ENCODE measurements at regions of chr6 and their contacts with region 1.

Region 1: DNA sequence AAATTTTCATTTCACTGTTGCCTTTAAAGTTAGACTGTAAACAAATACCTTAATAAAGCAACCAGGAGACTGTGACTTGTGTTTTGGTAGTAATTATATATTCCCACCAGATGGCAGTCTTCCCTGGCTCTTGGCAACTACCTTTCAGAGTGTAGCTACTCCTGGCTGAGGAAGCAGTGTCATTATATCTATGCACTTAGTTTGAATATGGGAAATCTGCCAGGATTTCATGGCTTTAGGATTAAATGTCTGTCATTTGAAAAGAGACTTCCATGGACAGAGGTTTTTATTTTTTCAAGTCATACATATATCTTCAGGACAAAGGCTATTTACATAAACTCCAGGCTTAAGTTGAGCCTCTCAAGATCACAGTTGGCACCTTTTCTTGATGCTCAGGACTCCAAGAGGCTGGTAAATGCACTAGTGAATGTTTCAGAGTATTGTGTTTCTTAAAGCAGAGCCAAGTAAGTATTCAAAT is 160.1 kb downstream of the C6orf58 start:
- DNase-seq: peak; percentile 45
- H3K4me3 ChIP-seq: no peak overlapping the region
- H3K27ac ChIP-seq: no peak overlapping the region
- H3K27me3 ChIP-seq: no peaks in the 10 kb centered on the region
- CTCF ChIP-seq: peak; percentile 68

Region 2: DNA sequence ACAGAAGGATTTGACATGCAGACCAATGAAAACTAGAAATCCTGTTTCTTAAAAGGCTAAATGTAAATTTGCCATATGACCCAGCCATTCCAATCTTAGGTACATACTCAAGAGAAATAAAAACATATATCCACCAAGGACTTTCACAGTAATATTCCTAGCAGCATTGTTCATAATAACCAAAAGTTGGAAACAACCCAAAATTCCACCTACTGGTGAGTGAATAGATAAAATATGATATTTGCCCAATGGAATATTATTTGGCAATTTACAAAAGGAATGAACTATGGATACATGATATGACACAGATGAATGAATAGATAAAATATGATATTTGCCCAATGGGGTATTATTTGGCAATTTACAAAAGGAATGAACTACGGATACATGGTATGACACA is 240.6 kb before region 1 on chr6:
- CTCF ChIA-PET with region 1: no interaction called
- POLR2A ChIA-PET with region 1: no interaction called
- DNase-seq: no peak
- H3K4me3 ChIP-seq: no peak overlapping the region
- H3K27ac ChIP-seq: no peak overlapping the region
- H3K27me3 ChIP-seq: no peaks in the 10 kb centered on the region
- CTCF ChIP-seq: no peak

Region 3: GRCh38 chr6:127710668-127711067 is 26.4 kb before region 1 on chr6:
- CTCF ChIA-PET with region 1: no interaction called
- POLR2A ChIA-PET with region 1: no interaction called
- DNase-seq: no peak
- H3K4me3 ChIP-seq: no peak overlapping the region
- H3K27ac ChIP-seq: no peak overlapping the region
- H3K27me3 ChIP-seq: peaks cover 3% of the 10 kb centered on the region
- CTCF ChIP-seq: no peak

Region 4: GRCh38 chr6:128516514-128516898 is 779.5 kb after region 1 on chr6:
- CTCF ChIA-PET with region 1: interaction called, 11 read pairs
- POLR2A ChIA-PET with region 1: no interaction called
- DNase-seq: no peak
- H3K4me3 ChIP-seq: peak overlapping the region; percentile 25; the same call in 1 of the 2 replicates
- H3K27ac ChIP-seq: no peak overlapping the region
- H3K27me3 ChIP-seq: no peaks in the 10 kb centered on the region
- CTCF ChIP-seq: peak; percentile 42

Region 5: DNA sequence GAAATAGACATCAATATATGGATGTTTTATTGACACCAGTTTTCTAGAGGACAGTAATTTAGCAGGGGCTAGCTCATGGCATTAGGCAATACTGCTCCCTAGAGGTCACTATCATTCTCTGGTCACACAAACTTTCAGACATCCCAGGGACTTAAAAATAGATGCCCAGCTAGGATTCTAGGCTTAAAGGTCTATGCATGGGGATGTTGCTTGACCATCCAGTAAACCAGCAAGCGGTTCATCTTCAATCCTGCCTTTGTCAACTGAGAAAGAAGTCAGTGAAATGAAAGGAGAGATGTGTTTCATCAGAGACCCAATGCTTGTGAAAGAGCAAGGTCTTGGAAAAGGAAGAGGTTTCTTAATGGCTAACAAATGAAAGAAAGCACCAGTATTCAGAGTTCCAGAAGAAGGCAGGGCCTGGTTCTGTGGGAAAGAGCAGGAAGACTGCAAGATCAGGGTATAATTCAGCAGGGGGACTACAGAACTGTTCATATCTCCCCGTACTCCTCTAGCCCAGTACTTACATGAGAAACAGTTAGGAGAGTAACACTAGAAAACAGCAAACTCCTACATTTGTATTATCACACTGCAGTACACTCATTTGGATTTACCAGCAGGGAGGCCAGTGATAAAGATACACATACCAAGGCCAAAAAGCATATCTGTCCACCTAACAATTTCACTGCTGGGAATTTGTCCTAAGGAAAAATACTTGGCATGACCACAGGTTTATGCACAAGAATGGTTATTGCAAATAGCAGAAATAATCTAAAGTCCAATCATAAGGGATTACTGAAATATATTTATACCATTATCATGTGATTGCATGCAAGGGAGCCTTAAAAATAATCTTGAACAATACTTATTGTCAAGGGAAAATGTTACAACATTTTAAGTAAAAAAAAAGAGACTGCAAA is 994.5 kb after region 1 on chr6:
- CTCF ChIA-PET with region 1: interaction called, 24 read pairs
- POLR2A ChIA-PET with region 1: no interaction called
- DNase-seq: peak; percentile 27
- H3K4me3 ChIP-seq: no peak overlapping the region
- H3K27ac ChIP-seq: no peak overlapping the region
- H3K27me3 ChIP-seq: no peaks in the 10 kb centered on the region
- CTCF ChIP-seq: peak; percentile 71